Cardiac septum (tissue), 1 donor: ENCODE measurements at regions of chr4 and their contacts with region 1.

Region 1: GRCh38 chr4:56655209-56655626 is 25.9 kb downstream of the HOPX start:
- DNase-seq: no peak

Region 2: DNA sequence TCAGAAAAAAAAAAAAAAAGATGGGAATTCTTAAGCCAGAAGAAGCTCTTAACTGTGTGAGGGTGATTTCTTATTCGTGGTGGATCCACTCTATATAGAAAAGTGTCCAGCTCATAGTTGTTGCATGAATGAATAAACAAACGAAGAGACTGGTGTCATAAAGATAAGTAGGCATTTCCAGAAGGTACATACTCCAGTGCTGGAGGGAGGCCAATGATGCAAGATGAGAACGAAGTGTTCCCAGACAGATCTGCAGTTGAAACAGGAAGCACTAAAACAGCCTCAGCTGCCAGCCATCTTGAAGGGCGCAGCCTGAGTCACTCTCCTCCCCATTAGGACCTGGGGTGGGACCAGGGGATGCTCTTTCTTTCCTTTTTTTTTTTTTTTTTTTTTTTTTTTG is 73.3 kb after region 1 on chr4:
- intact Hi-C with region 1: loop called (anchors 5 kb)
- DNase-seq: no peak

Region 3: GRCh38 chr4:56739066-56739777 is 84.0 kb after region 1 on chr4:
- intact Hi-C with region 1: no loop called
- DNase-seq: no peak

Region 4: GRCh38 chr4:56817840-56818491 is 162.7 kb after region 1 on chr4:
- intact Hi-C with region 1: no loop called
- DNase-seq: no peak